ENCODE measurements at regions of chr12 and their contacts with region 1.

Region 1: DNA sequence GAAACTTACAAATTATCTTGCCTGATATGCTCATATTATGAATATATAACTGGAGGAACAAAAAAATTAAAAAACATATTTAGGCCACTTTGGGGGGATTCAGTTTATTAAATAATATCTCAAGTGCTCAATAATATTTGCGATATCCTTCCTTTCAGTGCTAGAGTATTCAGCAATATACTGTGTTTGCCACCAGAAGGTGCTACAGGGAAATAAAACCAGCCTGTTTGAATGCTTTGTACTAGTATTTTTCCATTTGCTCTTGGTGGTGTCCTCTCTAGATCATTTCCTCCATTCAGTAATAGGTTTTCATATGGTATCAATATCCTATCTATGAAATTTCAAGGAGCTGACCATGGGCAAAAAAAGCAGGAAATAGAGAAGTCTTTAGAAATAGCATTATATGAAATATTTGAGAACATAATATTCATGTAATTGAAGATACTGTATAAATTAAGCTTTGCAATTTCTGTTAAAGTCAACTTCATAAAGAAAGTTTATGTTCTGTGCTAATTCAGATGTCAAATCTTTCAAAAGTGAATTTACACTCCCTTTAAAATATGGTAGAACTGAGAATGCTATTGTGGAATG is 106.2 kb upstream of the NAV3 start:
- DNase-seq: no peak
- H3K4me3 ChIP-seq: no peak overlapping the region
- H3K27ac ChIP-seq: no peak overlapping the region
- H3K4me1 ChIP-seq: no peaks in the 10 kb centered on the region
- H3K27me3 ChIP-seq: no peaks in the 10 kb centered on the region
- CTCF ChIP-seq: peak; percentile 38 to 67 (median 41)
- EP300 ChIP-seq: no peak
- POLR2A ChIP-seq: no peak

Region 2: DNA sequence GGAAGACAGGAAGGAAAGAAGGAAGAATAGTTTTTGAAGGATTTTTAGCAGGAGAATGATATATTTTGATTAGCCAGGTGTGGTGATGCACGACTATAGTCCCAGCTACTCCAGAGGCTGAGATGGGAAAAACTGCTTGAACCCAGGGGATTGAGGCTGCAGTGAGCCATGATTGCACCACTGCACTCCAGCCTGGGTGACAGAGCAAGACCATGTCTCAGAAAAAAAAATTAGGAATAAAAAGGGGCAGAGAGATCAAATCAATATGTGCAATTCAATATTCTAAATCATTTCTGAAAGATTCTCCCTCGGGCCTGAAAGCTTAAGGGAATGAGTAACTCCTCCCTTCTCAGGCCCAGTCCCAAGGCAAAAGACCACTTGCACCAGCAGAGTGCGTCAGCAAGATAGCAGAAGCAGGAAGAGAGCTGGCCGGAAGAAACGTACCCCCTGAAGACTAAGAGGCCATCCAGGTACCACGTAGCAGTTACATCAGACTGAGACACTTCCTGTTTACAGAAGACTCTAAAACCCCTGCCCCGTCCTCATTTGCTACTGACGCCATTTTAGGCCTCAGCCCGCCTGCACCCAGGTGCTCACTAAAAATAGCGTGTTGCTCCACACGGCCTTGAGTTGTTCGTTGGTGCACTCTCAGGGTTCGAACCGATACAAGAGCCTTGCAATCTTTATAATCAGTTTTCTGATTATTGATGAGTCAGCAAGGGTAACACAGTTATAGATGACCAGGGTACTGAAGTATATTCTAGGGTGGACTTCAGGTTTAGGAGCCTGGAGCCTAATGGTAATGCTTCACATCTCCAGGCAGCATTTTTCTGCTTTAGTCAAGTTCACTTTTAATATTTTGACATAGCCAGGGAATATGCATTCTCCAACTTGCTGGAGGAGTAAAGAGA is 787.9 kb before region 1 on chr12:
- in situ Hi-C with region 1: no loop called
- intact Hi-C with region 1: loop called (anchors 5 kb)
- DNase-seq: no peak
- H3K4me3 ChIP-seq: no peak overlapping the region
- H3K27ac ChIP-seq: no peak overlapping the region
- H3K4me1 ChIP-seq: no peaks in the 10 kb centered on the region
- H3K27me3 ChIP-seq: no peaks in the 10 kb centered on the region
- CTCF ChIP-seq: no peak
- EP300 ChIP-seq: no peak
- POLR2A ChIP-seq: no peak

Region 3: DNA sequence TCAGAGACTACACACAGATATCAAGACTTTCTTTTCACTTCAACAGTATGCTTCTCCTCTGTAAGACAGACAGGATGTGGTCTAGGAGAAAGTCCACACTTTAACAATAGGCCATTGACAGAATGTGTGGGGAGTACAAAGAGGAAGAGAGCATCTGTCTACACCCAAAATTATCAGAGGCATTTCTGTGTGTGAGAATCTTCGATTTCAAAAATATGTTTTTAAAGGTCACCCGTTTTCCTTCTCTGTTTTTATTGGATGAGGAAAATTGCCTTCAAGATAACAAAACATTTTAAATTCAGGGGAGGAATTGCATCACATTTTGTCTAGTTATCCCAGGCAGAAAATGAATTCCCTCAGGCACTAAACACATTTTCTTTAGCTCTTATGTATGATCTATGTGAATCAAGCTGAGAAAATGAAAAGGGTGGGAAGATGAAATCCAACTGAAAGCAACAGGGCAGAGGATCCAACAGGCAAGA is 122.6 kb after region 1 on chr12:
- in situ Hi-C with region 1: no loop called
- intact Hi-C with region 1: no loop called
- DNase-seq: no peak
- H3K4me3 ChIP-seq: no peak overlapping the region
- H3K27ac ChIP-seq: peak overlapping the region in 3 of 4 donors; percentile 13 to 55 (median 35)
- H3K4me1 ChIP-seq: peaks cover 0 to 15% (median 0%) of the 10 kb centered on the region in 4 donors
- H3K27me3 ChIP-seq: no peaks in the 10 kb centered on the region
- CTCF ChIP-seq: no peak
- EP300 ChIP-seq: no peak
- POLR2A ChIP-seq: no peak

Region 4: DNA sequence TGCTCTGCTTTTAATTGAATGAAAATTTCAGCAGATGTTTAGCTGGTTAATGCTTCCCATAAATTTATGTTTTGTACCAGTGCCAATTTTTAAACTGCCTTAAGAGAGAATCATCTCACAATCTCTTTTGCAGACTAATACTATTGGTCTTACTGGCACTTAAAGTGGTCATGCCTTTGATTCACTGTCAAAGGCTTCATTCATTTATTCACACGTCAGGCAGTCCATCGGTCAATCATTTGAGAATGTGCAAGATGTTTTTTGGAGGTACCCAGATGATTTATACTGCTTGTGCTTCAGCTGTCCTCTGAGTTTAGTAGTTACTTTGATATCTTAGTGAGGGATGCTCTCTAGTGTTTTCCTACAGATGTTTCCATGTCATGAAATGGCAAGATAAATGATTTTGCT is 189.6 kb after region 1 on chr12:
- in situ Hi-C with region 1: loop called in 1 of 4 experiments (anchors 10 kb)
- intact Hi-C with region 1: no loop called
- DNase-seq: no peak
- H3K4me3 ChIP-seq: no peak overlapping the region
- H3K27ac ChIP-seq: no peak overlapping the region
- H3K4me1 ChIP-seq: no peaks in the 10 kb centered on the region
- H3K27me3 ChIP-seq: no peaks in the 10 kb centered on the region
- CTCF ChIP-seq: no peak
- EP300 ChIP-seq: no peak
- POLR2A ChIP-seq: no peak

Region 5: GRCh38 chr12:77925536-77926108 is 201.2 kb after region 1 on chr12:
- in situ Hi-C with region 1: loop called in 2 of 4 experiments (anchors 10 kb)
- intact Hi-C with region 1: loop called (anchors 5 kb)
- DNase-seq: peak; percentile 54
- H3K4me3 ChIP-seq: no peak overlapping the region
- H3K27ac ChIP-seq: no peak overlapping the region
- H3K4me1 ChIP-seq: no peaks in the 10 kb centered on the region
- H3K27me3 ChIP-seq: no peaks in the 10 kb centered on the region
- CTCF ChIP-seq: peak; percentile 72 to 93 (median 80)
- EP300 ChIP-seq: no peak
- POLR2A ChIP-seq: no peak